ENCODE measurements at regions of chrX and their contacts with region 1.

Region 1: GRCh38 chrX:63560601-63561218 is 209.6 kb upstream of the SPIN4 start:
- DNase-seq: peak; percentile 34
- ATAC-seq: peak; percentile 78
- H3K4me3 Mint-ChIP-seq: peak overlapping the region; percentile 97
- H3K27ac Mint-ChIP-seq: peak overlapping the region; percentile 87
- H3K4me1 Mint-ChIP-seq: peaks cover 27% of the 10 kb centered on the region
- H3K27me3 Mint-ChIP-seq: no peaks in the 10 kb centered on the region
- CTCF ChIP-seq: no peak

Region 2: DNA sequence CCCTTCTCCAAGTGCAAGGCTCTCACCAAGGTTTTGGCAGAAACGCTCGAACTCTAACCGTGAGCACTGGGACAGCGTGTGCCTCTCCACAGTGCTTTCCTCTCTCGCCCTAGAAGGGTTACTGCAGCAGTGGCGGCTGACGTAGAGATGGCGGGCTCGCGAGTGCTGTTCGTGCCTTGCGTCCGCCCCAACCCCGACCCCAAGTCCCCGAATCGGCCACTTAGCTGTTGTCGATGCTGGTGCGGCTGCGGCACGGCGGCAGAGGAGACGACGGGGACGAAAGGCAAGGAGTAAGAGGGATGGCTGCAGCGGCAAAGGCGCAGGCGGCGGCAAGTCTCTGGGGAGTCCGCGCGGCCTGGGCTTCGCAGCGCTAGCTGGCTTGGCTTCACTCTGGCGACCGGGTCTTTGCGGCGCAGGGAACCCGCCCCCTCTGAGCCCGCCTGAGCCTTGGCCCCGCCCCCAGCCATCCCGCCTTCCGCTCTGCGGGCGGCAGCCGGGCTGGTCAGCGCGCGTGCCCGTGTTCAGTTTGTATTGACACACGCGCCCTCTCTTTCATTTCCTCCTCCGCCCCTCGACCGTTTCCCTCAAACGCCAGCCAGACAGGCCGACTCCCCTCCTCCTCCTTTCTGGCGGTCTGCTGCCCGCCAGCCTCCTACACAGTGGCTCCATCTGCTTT is 209.6 kb before region 1 on chrX and contains the start of gene SPIN4:
- CTCF ChIA-PET with region 1: no interaction called
- POLR2A ChIA-PET with region 1: no interaction called
- intact Hi-C with region 1: loop called (anchors 2 kb)
- DNase-seq: peak; percentile 67
- ATAC-seq: peak; percentile 97
- H3K4me3 Mint-ChIP-seq: peak within 1 kb of the TSS; percentile 94
- H3K27ac Mint-ChIP-seq: peak within 1 kb of the TSS; percentile 80
- H3K4me1 Mint-ChIP-seq: peaks cover 18% of the 10 kb centered on the region
- H3K27me3 Mint-ChIP-seq: no peaks in the 10 kb centered on the region
- CTCF ChIP-seq: no peak
- total RNA-seq, gene SPIN4: 2.1 and 2.4 TPM in 2 replicates

Region 3: GRCh38 chrX:63503541-63503940 is 57.2 kb before region 1 on chrX:
- CTCF ChIA-PET with region 1: no interaction called
- POLR2A ChIA-PET with region 1: no interaction called
- intact Hi-C with region 1: no loop called
- DNase-seq: no peak
- ATAC-seq: no peak
- H3K4me3 Mint-ChIP-seq: no peak overlapping the region
- H3K27ac Mint-ChIP-seq: no peak overlapping the region
- H3K4me1 Mint-ChIP-seq: peaks cover 3% of the 10 kb centered on the region
- H3K27me3 Mint-ChIP-seq: no peaks in the 10 kb centered on the region
- CTCF ChIP-seq: no peak

Measured in activated B cell treated with CpG ODN at 0.5 μM for 24 hours (primary cell).